ENCODE measurements at regions of chr5 and their contacts with region 1.

Region 1: DNA sequence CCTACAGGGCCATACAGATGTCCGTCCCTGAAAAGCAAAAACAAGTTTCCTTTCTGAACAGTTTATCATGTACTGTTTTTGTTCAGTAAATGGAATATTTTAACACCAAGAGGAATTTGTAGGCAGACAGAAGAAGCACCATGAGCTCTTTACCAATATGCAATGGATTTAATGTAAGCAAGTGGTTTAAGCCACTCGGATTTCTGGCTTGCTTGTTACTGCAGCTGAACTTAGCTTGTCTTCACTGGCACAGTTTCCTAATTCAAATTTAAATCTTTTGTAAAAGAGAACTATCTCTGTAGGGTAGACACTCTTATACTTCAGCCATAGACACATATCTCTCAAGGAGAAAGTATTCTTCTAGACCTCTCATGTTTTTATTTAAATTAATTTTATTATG is 12.7 kb upstream of the EBF1 start:
- DNase-seq: no peak
- ATAC-seq: no peak
- H3K4me3 ChIP-seq: no peak overlapping the region
- H3K27ac ChIP-seq: no peak overlapping the region
- H3K4me1 ChIP-seq: no peaks in the 10 kb centered on the region
- H3K27me3 ChIP-seq: peaks cover 26% of the 10 kb centered on the region
- CTCF ChIP-seq: no peak

Region 2: GRCh38 chr5:158074992-158075769 is 1037.3 kb before region 1 on chr5:
- CTCF ChIA-PET with region 1: interaction called, 6 read pairs
- POLR2A ChIA-PET with region 1: no interaction called
- in situ Hi-C with region 1: no loop called
- intact Hi-C with region 1: loop called (anchors 5 kb)
- DNase-seq: peak; percentile 15
- ATAC-seq: peak; percentile 79
- H3K4me3 ChIP-seq: no peak overlapping the region
- H3K27ac ChIP-seq: no peak overlapping the region
- H3K4me1 ChIP-seq: no peaks in the 10 kb centered on the region
- H3K27me3 ChIP-seq: no peaks in the 10 kb centered on the region
- CTCF ChIP-seq: peak; percentile 91

Measured in Panc1 (cell line).